ENCODE measurements at regions of chr6 and their contacts with region 1.

Region 1: GRCh38 chr6:32885698-32886286 is 31.8 kb downstream of the PSMB9 start:
- DNase-seq: no peak
- H3K4me3 ChIP-seq: no peak overlapping the region
- H3K27ac ChIP-seq: no peak overlapping the region
- H3K4me1 ChIP-seq: peaks cover 0 to 9% of the 10 kb centered on the region in 2 donors
- H3K27me3 ChIP-seq: no peaks in the 10 kb centered on the region
- CTCF ChIP-seq: peak in 5 of 6 experiments; percentile 45 to 90 (median 62)
- POLR2A ChIP-seq: no peak

Region 2: DNA sequence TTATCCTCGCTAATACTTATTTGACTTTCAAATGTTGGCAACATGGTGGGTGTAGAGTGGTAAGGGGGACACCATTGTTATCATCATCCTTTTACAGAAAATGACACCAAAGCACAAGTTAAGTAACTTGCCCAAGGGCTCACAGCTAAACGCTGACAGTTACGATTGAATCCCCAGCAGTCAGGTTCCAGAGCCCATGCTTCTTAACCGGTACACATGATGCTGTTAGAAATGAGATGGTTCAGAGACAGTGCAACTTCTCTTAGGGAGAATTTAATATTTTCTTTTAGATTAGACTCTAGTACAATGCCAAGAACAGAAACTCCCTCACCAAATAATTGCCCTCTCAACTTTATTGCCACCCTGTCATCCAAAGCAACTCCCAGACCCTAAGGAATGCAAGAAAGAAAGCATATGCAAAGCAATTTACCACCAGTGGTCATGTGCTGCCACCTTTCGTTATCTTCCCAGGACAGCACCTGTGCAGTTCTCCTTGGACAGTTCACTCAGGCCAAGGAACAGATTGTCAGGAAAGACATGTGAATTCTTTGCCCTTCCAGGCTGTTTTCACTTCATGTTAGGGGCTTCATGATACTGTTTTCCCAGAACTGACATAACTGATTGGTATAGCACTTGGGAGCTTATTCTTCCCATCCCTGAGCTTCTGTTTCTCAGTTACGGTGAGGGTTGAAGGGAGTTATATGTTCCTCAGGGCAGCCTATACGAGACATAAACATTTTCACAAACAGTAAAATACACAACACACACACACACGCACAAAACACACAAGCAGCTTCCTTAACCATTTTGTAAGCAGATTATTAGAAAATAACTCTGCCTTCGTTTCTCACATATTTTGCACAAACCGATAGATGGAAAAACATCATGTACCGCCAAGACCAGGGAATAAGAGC is 62.0 kb after region 1 on chr6:
- intact Hi-C with region 1: loop called (anchors 2 kb)
- DNase-seq: peak; percentile 67 to 72
- H3K4me3 ChIP-seq: no peak overlapping the region
- H3K27ac ChIP-seq: no peak overlapping the region
- H3K4me1 ChIP-seq: peaks cover 15 to 20% of the 10 kb centered on the region in 2 donors
- H3K27me3 ChIP-seq: no peaks in the 10 kb centered on the region
- CTCF ChIP-seq: peak in 5 of 6 experiments; percentile 49 to 94 (median 89)
- POLR2A ChIP-seq: no peak

Region 3: GRCh38 chr6:32984605-32985389 is 99.0 kb after region 1 on chr6:
- intact Hi-C with region 1: loop called (anchors 5 kb)
- DNase-seq: peak; percentile 96 to 97
- H3K4me3 ChIP-seq: no peak overlapping the region
- H3K27ac ChIP-seq: no peak overlapping the region
- H3K4me1 ChIP-seq: peaks cover 0 to 6% of the 10 kb centered on the region in 2 donors
- H3K27me3 ChIP-seq: no peaks in the 10 kb centered on the region
- CTCF ChIP-seq: peak; percentile 76 to 92 (median 89)
- POLR2A ChIP-seq: no peak